Ovary (tissue), 10 donors: ENCODE measurements at regions of chr6 and their contacts with region 1.

Region 1: GRCh38 chr6:56259234-56260077 is 12.1 kb upstream of the COL21A1 start:
- DNase-seq: no peak
- H3K4me3 ChIP-seq: no peak overlapping the region
- H3K27ac ChIP-seq: no peak overlapping the region
- H3K4me1 ChIP-seq: no peaks in the 10 kb centered on the region
- H3K27me3 ChIP-seq: no peaks in the 10 kb centered on the region
- CTCF ChIP-seq: no peak
- EP300 ChIP-seq: no peak
- POLR2A ChIP-seq: no peak

Region 2: DNA sequence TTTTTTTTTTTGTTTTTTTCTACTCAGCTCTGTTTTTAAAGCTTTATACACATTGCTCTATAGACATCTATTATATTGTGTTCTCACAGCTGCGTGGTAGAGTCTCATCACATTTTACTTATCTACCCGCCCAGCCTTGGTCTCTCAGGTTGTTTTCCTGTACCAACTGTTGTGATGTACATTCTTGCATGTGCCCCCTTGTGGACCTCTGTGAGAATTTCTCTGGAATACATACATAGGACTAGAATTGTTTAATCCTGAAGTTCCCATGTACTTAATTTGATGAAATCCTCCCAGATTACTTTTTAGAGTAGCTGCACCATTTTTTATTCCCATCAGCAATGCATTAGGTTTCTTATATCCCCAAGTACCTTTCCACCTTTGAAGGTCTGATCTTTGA is 1991.7 kb before region 1 on chr6:
- intact Hi-C with region 1: loop called in 1 of 4 experiments (anchors 5 kb)
- DNase-seq: no peak
- H3K4me3 ChIP-seq: no peak overlapping the region
- H3K27ac ChIP-seq: no peak overlapping the region
- H3K4me1 ChIP-seq: no peaks in the 10 kb centered on the region
- H3K27me3 ChIP-seq: no peaks in the 10 kb centered on the region
- CTCF ChIP-seq: no peak
- EP300 ChIP-seq: no peak
- POLR2A ChIP-seq: no peak